ENCODE measurements at regions of chr7 and their contacts with region 1.

Region 1: DNA sequence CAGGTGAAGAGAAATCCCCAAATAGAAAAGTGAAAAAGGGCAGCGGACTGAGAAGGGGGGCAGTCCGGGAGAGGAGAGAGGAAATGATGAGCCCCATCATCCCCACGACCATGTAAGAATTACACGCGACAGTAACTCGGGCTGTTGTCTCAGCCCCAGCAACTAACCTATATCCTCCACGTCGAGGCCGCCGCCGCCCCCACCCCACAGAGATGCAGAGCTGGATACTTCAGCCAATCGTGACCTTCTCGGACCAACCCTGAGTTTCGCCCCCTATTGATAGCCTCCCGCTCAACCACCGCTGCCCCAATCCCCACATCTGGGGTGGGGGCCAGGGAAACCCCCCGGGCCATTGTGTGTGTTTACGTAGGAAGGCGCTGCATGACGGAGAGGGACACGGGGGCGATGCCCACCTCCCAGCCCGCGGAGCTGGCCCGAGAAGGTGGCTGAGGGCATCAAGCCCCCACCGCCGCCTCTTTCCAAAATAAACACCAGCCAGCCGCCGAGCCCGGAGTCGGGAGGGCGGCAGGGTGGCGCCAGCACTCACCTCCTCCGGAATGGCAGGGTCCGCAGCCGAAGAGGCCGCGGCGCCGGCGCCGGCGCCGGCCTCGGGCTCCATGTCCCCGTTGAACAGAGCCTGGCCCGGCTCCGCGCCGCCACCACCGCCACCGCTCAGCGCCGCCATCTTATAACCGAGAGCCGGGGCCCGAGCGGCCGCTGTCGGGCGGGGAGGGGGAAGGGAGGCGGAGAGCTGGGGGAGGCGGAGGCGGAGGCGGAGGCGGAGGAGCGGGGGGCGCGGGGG is 509 bp downstream of the BRAF start:
- DNase-seq: peak; percentile 35
- ATAC-seq: peak; percentile 67
- H3K4me3 ChIP-seq: peak overlapping the region; percentile 93
- H3K27ac ChIP-seq: peak overlapping the region; percentile 56
- H3K4me1 ChIP-seq: peaks cover 29% of the 10 kb centered on the region
- H3K27me3 ChIP-seq: no peaks in the 10 kb centered on the region
- CTCF ChIP-seq: peak; percentile 59

Region 2: GRCh38 chr7:140479062-140479738 is 445.0 kb before region 1 on chr7 and contains the start of gene MKRN1:
- CTCF ChIA-PET with region 1: no interaction called
- POLR2A ChIA-PET with region 1: interaction called, 16 read pairs
- intact Hi-C with region 1: no loop called
- DNase-seq: peak; percentile 95
- ATAC-seq: peak; percentile 93
- H3K4me3 ChIP-seq: peak within 1 kb of the TSS; percentile 99
- H3K27ac ChIP-seq: peak within 1 kb of the TSS; percentile 58
- H3K4me1 ChIP-seq: no peaks in the 10 kb centered on the region; the same call in 1 of the 2 replicates
- H3K27me3 ChIP-seq: no peaks in the 10 kb centered on the region
- CTCF ChIP-seq: no peak
- total RNA-seq, gene MKRN1: 71.9 and 78.5 TPM in 2 replicates

Region 3: DNA sequence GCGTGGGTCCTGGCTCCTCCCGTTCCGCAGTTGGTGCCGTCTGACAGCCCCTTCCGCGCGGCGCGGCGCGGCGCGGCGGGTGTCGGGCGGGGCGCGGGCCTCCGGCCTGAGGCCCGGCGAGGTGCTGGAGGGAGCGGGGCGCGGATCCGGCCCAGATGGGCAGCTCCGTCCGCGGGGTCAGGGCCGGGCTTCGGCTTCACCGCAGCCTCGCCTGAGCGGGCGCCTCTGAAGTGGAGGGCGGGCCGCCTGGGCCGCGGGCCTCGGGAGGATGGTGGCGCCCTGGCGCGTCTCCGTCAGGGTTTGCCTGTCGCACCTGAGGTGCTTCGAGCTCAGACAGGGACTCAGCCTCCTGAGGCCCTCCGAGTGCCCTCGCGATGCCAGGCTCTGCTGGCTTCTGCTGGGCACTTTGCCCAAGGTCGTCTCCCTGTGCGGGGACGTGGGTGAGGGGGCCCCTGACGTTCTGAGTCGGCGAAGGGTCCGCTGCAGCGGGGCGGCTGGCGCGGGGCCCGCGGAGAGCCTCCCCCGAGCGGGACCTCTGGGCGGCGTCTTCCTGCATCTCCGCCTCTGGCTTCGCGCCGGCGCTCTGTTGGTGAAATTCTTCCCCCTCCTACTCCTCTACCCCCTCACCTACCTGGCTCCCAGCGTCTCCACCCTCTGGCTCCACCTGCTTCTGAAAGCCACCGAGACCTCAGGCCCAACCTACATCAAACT is 251.0 kb before region 1 on chr7:
- CTCF ChIA-PET with region 1: no interaction called
- POLR2A ChIA-PET with region 1: no interaction called
- intact Hi-C with region 1: loop called (anchors 10 kb)
- DNase-seq: peak; percentile 82
- ATAC-seq: peak; percentile 71
- H3K4me3 ChIP-seq: peak overlapping the region; percentile 71
- H3K27ac ChIP-seq: peak overlapping the region; percentile 33; the same call in 1 of the 2 replicates
- H3K4me1 ChIP-seq: peaks cover 25% of the 10 kb centered on the region
- H3K27me3 ChIP-seq: no peaks in the 10 kb centered on the region
- CTCF ChIP-seq: no peak; the same call in 1 of the 2 replicates

Region 4: DNA sequence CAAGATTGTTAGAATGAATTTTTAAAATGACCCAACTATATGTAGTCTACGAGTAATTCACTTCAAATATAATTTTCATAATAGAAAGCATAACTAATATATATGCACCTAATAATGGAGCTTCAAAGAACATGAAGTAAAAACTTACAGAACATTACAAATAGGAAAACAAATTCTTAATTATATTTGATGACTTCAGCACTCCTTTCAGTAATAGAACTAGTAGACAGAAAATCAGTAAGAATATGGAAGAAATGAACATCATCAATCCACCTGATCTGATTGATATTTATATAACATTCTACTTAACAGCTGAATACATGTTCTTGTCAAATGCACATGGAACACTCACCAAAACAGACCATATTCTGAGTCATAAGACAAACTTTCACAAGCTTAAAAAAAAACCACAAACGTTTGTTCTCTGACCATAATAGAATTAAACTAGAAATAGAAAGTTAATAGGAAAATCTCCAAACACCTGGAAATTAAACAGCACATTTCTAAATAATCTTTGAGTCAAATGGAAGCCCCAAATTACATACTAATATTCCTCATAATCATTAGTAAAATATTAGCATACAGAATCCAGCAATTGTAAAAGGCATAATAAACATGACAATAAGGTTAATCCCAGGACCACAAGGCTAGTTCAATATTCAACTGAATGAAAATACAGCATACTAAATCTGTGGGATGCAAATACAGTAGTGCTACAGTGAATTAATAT is 47.5 kb before region 1 on chr7:
- CTCF ChIA-PET with region 1: no interaction called
- POLR2A ChIA-PET with region 1: interaction called, 3 read pairs
- intact Hi-C with region 1: loop called (anchors 2 kb)
- DNase-seq: peak; percentile 75
- ATAC-seq: peak; percentile 85
- H3K4me3 ChIP-seq: 0 out of 2 replicates have a peak overlapping the region, but pooled peaks have one; percentile 46
- H3K27ac ChIP-seq: peak overlapping the region; percentile 22
- H3K4me1 ChIP-seq: peaks cover 12% of the 10 kb centered on the region
- H3K27me3 ChIP-seq: no peaks in the 10 kb centered on the region
- CTCF ChIP-seq: no peak

Region 5: GRCh38 chr7:140914083-140914482 is 10.1 kb before region 1 on chr7:
- CTCF ChIA-PET with region 1: interaction called, 8 read pairs
- POLR2A ChIA-PET with region 1: interaction called, 7 read pairs
- intact Hi-C with region 1: loop called (anchors 1 kb)
- DNase-seq: peak; percentile 20
- ATAC-seq: 0 out of 2 replicates have a peak, but pooled peaks have one; percentile 9
- H3K4me3 ChIP-seq: peak overlapping the region; percentile 30
- H3K27ac ChIP-seq: peak overlapping the region; percentile 83
- H3K4me1 ChIP-seq: peaks cover 30% of the 10 kb centered on the region
- H3K27me3 ChIP-seq: no peaks in the 10 kb centered on the region
- CTCF ChIP-seq: no peak

Region 6: GRCh38 chr7:140983802-140984201 is 59.6 kb after region 1 on chr7:
- CTCF ChIA-PET with region 1: interaction called, 4 read pairs
- POLR2A ChIA-PET with region 1: interaction called, 6 read pairs
- intact Hi-C with region 1: loop called (anchors 2 kb)
- DNase-seq: peak; percentile 64
- ATAC-seq: no peak
- H3K4me3 ChIP-seq: no peak overlapping the region
- H3K27ac ChIP-seq: no peak overlapping the region
- H3K4me1 ChIP-seq: peaks cover 10% of the 10 kb centered on the region
- H3K27me3 ChIP-seq: no peaks in the 10 kb centered on the region
- CTCF ChIP-seq: peak; percentile 65

Region 7: GRCh38 chr7:141045842-141046630 is 121.8 kb after region 1 on chr7:
- CTCF ChIA-PET with region 1: no interaction called
- POLR2A ChIA-PET with region 1: no interaction called
- intact Hi-C with region 1: no loop called
- DNase-seq: no peak
- ATAC-seq: no peak
- H3K4me3 ChIP-seq: no peak overlapping the region
- H3K27ac ChIP-seq: no peak overlapping the region
- H3K4me1 ChIP-seq: no peaks in the 10 kb centered on the region
- H3K27me3 ChIP-seq: peaks cover 33% of the 10 kb centered on the region; the same call in 1 of the 2 replicates
- CTCF ChIP-seq: no peak

Measured in PC-3 (cell line).